ENCODE measurements at regions of chr12 and their contacts with region 1.

Region 1: DNA sequence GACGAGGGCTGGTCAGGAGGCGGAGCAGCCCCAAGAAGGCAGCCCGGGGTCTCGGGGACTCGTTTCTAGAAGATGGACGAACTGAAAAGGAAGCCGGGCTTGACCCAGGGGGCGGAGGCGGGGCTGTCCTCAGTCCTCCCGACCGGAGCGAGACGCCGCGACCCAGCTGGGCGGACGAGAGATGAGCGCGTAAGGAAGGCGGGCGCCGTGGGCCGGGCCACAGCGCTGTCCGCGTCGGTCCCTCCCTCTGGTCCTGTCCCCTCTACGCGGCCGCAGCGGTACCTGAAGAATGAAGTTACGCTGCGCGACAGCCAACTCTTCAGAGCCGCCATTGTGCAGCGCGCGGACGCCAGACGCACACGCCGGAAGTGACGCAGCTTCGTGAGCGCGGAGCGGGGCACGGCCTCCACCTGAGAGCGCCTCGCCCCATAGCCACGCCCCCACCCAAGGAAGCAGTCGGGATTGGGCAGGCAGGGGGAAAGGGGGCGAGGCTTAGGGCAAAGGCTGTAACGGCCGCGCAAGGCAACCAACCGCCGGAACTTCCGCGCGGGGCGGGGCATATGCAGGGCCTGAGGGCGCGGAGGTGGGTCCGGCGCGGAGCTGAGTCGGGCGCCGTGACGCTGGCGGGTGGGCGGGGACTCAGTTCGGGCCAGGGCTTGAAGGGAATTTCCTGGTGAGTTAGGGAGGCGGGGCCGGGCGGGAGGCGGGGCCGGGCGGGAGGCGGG is at the start of gene DIABLO:
- DNase-seq: peak; percentile 99 to 100 (median 100)
- H3K4me3 ChIP-seq: peak within 1 kb of the TSS; percentile 74 to 99 (median 96)
- H3K27ac ChIP-seq: peak within 1 kb of the TSS; percentile 89 to 94
- H3K4me1 ChIP-seq: peaks cover 0 to 29% (median 21%) of the 10 kb centered on the region in 4 experiments
- H3K27me3 ChIP-seq: no peaks in the 10 kb centered on the region

Region 2: DNA sequence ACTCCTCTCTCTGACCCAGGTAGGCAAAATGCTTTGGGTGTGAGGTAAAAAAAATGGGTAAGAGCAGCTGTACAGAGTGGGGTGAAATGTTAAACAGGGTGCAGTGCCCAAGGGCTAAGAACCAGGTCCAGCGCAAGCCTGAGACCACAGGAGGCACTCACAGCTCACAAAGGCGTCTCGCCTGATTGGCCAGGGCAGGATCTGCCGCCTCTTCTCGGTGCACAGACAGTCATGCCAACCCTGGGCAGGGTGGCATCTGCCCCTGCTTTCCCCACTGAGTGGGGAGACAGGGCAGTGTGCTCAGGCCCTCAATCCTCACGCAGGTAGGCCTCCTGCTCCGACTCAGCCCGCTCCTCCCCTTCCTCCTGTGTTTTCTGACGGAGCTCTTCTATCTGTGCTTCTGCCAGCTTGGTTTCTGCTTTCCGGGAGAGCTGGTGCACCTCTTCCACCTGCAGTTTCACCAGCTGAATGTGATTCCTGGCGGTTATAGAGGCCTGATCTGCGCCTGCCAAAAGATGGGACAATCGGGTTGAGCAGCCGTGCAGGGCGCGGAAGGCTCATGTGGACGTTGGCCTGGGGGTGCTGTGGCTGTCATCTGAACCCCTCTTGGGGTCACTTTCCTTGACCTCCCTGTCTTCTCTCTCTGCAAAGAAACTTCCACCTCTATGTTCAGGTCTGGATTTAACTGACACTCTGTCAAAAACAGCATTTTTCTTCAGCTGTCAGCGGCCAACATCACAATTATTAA is 17.6 kb before region 1 on chr12:
- CTCF ChIA-PET with region 1: interaction called, 15 read pairs
- POLR2A ChIA-PET with region 1: interaction called, 3 read pairs
- DNase-seq: no peak
- H3K4me3 ChIP-seq: no peak overlapping the region
- H3K27ac ChIP-seq: no peak overlapping the region
- H3K4me1 ChIP-seq: peaks cover 0 to 19% (median 11%) of the 10 kb centered on the region in 4 experiments
- H3K27me3 ChIP-seq: peaks cover 0 to 31% (median 8%) of the 10 kb centered on the region in 5 experiments

Measured in common myeloid progenitor, CD34-positive (primary cell).